ENCODE measurements at regions of chr12 and their contacts with region 1.

Region 1: DNA sequence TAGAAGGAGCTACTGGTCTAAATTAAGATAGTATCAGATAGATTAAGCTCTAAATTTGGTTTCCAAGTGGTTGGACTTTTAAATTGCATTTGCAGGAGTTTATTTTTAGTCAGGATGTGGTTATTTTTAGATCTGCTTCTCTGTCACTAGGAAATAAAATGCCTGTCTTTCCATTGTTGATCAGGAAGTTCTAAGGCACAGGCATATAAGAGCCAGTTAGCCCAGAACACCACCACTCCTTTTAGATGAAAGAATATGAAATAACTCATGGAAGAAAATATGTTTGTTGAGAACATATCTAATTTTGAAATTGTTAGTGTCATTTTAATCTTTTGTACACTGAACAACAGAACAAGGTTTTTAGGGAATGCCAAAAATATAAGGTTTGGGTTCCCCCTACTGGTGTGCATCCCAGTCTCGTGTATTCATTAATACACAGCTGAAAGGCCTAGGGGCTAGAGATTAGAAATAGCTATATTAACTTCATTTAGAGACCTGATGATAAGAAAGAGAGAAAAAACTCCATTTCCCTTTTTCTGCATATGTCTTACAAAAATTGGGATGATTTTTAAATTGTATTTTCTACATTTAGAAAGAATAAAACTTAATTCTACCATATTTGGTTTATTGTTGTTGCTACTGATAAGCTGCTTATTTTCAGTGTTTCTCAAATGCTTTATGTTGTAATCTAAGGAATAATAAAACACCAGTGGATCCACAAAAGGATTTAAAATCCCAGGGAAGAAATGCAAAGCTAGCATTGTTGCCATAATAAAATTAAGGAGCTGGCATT is 67.2 kb downstream of the RIC8B start:
- DNase-seq: no peak
- H3K4me3 Mint-ChIP-seq: no peak overlapping the region
- H3K27ac Mint-ChIP-seq: no peak overlapping the region
- H3K4me1 Mint-ChIP-seq: peaks cover 12% of the 10 kb centered on the region
- H3K27me3 Mint-ChIP-seq: no peaks in the 10 kb centered on the region

Region 2: DNA sequence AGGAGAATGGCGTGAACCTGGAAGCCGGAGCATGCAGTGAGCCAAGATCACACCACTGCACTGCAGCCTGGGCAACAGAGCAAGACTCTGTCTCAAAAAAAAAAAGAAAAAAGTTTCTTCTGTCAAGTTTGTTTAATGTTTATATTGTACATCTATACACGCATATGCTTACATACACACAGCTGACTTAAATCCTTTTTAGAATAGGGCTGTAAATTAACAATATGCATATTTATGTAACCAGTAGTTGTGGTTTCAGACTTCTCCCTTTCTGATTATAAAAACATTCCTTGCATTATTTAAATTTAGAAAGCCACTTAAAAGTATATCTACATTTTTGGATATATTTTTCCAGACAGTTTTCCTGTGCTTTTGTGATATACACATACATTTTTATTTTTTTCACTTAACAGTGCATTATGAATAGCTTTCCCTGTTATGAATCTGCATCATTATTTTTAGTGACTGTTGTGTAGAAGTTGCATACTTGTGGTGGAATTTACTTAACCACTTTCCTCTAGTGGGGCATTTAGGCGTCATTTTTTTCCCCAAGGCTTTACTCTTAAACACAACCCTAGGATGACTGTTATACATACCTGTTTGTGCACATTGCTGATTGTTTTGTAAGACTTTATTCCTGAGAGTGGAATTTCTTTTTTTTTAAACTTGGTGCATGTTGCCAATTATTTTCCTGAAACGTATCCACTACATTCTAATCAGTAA is 454.7 kb before region 1 on chr12:
- intact Hi-C with region 1: loop called (anchors 1 kb)
- DNase-seq: no peak
- H3K4me3 Mint-ChIP-seq: no peak overlapping the region
- H3K27ac Mint-ChIP-seq: no peak overlapping the region
- H3K4me1 Mint-ChIP-seq: no peaks in the 10 kb centered on the region
- H3K27me3 Mint-ChIP-seq: no peaks in the 10 kb centered on the region

Region 3: GRCh38 chr12:106581543-106582248 is 260.0 kb before region 1 on chr12:
- intact Hi-C with region 1: loop called (anchors 10 kb)
- DNase-seq: no peak
- H3K4me3 Mint-ChIP-seq: no peak overlapping the region
- H3K27ac Mint-ChIP-seq: peak overlapping the region; percentile 11
- H3K4me1 Mint-ChIP-seq: peaks cover 8% of the 10 kb centered on the region
- H3K27me3 Mint-ChIP-seq: peaks cover 67% of the 10 kb centered on the region

Region 4: GRCh38 chr12:106682592-106683234 is 159.0 kb before region 1 on chr12:
- intact Hi-C with region 1: loop called (anchors 1 kb)
- DNase-seq: no peak
- H3K4me3 Mint-ChIP-seq: no peak overlapping the region
- H3K27ac Mint-ChIP-seq: no peak overlapping the region
- H3K4me1 Mint-ChIP-seq: no peaks in the 10 kb centered on the region
- H3K27me3 Mint-ChIP-seq: no peaks in the 10 kb centered on the region

Measured in activated T-helper 1 cell treated with anti-CD3 and anti-CD28 coated beads, Interleukin-12 subunit alpha, Interleukin-12 subunit beta, Interleukin-2, Interleukin-4 antibody, amounts not matched to agents 30 ng/mL and 10 ng/mL and 1 ng/mL, durations not matched to agents 14 hours and 24 hours and 36 hours (primary cell).